ENCODE measurements at regions of chr1 and their contacts with region 1.

Region 1: DNA sequence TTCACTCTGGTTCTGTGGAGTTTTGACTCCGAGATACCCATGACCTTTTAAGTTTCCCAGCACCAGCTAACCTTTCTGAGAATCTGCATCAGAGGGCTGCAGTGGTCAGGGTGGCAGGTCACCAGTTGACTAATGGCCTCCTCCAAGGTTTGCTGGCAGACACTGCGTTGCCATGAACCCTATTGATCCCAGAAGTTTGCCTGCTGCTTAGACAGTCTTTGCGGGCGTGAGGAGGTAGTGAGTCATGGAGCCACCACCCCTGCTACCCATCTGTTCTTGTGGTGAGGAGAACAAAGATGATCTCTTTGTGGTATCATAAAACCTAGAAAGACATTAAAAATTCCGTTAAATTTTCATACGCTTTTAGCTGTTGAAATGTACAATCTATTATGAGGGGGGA is 180.4 kb downstream of the FGGY start:
- DNase-seq: peak; percentile 30
- H3K4me3 Mint-ChIP-seq: peak overlapping the region; percentile 15
- H3K27ac Mint-ChIP-seq: peak overlapping the region; percentile 84
- H3K4me1 Mint-ChIP-seq: peaks cover 9% of the 10 kb centered on the region
- H3K27me3 Mint-ChIP-seq: no peaks in the 10 kb centered on the region

Region 2: GRCh38 chr1:59025898-59026426 is 451.3 kb before region 1 on chr1:
- intact Hi-C with region 1: loop called (anchors 1 kb)
- DNase-seq: no peak
- H3K4me3 Mint-ChIP-seq: no peak overlapping the region
- H3K27ac Mint-ChIP-seq: no peak overlapping the region
- H3K4me1 Mint-ChIP-seq: peaks cover 17% of the 10 kb centered on the region
- H3K27me3 Mint-ChIP-seq: no peaks in the 10 kb centered on the region

Region 3: GRCh38 chr1:59296358-59297256 is 180.7 kb before region 1 on chr1 and contains the start of gene FGGY:
- intact Hi-C with region 1: loop called (anchors 1 kb)
- DNase-seq: peak; percentile 86
- H3K4me3 Mint-ChIP-seq: peak within 1 kb of the TSS; percentile 91
- H3K27ac Mint-ChIP-seq: peak within 1 kb of the TSS; percentile 91
- H3K4me1 Mint-ChIP-seq: peaks cover 48% of the 10 kb centered on the region
- H3K27me3 Mint-ChIP-seq: no peaks in the 10 kb centered on the region
- total RNA-seq, gene FGGY: 7.1 and 8.2 TPM in 2 replicates

Region 4: GRCh38 chr1:59332983-59333382 is 144.3 kb before region 1 on chr1:
- intact Hi-C with region 1: loop called (anchors 1 kb)
- DNase-seq: peak; percentile 47
- H3K4me3 Mint-ChIP-seq: peak overlapping the region; percentile 15
- H3K27ac Mint-ChIP-seq: peak overlapping the region; percentile 78
- H3K4me1 Mint-ChIP-seq: peaks cover 44% of the 10 kb centered on the region
- H3K27me3 Mint-ChIP-seq: no peaks in the 10 kb centered on the region

Region 5: DNA sequence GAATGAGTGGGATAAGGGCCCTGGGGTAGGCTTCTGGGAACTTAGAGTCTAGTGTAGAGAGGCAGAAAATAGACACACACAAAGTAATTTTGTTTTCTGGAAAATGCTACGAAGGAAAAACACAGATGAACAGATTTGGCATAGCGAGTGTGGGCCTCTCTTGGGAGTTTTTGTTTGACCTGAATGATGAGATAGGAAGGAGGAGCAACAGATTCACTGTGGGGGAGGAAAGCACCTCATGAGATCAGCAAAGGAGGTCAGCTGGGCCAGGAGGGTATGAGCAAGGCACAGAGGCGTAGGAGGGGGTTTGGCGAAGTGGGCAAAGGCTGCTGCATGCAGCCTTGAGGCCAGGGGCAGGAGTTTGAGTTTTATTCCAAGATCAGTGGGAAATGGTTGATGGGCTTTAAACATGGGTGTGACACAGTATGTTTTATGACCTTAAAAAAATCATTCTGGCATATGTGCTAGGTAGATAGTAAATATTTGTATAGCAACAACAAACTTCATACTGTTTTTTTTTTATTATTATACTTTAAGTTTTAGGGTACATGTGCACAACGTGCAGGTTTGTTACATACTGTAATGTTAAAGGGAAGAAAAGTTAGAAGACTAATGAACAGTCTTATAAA is 122.5 kb before region 1 on chr1:
- intact Hi-C with region 1: loop called (anchors 1 kb)
- DNase-seq: no peak
- H3K4me3 Mint-ChIP-seq: peak overlapping the region; percentile 13
- H3K27ac Mint-ChIP-seq: peak overlapping the region; percentile 94
- H3K4me1 Mint-ChIP-seq: peaks cover 41% of the 10 kb centered on the region
- H3K27me3 Mint-ChIP-seq: peaks cover 2% of the 10 kb centered on the region

Region 6: GRCh38 chr1:59494145-59494833 is 17.0 kb after region 1 on chr1:
- intact Hi-C with region 1: loop called (anchors 1 kb)
- DNase-seq: no peak
- H3K4me3 Mint-ChIP-seq: no peak overlapping the region
- H3K27ac Mint-ChIP-seq: peak overlapping the region; percentile 86
- H3K4me1 Mint-ChIP-seq: peaks cover 15% of the 10 kb centered on the region
- H3K27me3 Mint-ChIP-seq: peaks cover 3% of the 10 kb centered on the region